Activated T-helper 1 cell treated with anti-CD3 and anti-CD28 coated beads, Interleukin-12 subunit alpha, Interleukin-12 subunit beta, Interleukin-2, Interleukin-4 antibody, amounts not matched to agents 30 ng/mL and 10 ng/mL and 1 ng/mL, durations not matched to agents 14 hours and 24 hours and 36 hours (primary cell): ENCODE measurements at regions of chr17 and their contacts with region 1.

Region 1: GRCh38 chr17:59707114-59707970 is at the starts of genes PTRH2 and VMP1:
- DNase-seq: peak; percentile 92
- H3K4me3 Mint-ChIP-seq: peak within 1 kb of the TSS; percentile 98
- H3K27ac Mint-ChIP-seq: peak within 1 kb of the TSS; percentile 96
- H3K4me1 Mint-ChIP-seq: peaks cover 50% of the 10 kb centered on the region
- H3K27me3 Mint-ChIP-seq: no peaks in the 10 kb centered on the region
- total RNA-seq, gene PTRH2: 49.7 and 51.1 TPM in 2 replicates
- total RNA-seq, gene VMP1: 357 and 374 TPM in 2 replicates

Region 2: DNA sequence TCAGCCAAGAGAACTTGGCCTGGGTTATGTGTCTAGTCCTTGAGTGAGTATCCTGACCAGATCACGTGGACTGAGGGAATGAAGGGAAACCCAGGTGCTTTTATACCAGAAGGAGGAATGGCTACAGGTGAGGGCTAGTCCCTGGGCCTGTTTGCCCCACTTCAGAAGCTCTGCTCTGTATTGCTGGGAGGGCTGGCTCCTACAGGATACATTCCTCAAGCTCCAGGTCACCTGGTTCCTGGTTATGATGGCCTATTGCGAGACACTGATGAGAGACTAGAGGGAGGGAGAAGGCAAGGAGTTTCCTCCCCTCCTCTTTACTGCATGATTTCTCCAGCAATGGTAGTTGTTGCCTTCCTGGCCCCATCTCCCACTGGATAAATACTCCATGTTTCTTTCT is 516.5 kb before region 1 on chr17:
- intact Hi-C with region 1: no loop called
- DNase-seq: no peak
- H3K4me3 Mint-ChIP-seq: no peak overlapping the region
- H3K27ac Mint-ChIP-seq: no peak overlapping the region
- H3K4me1 Mint-ChIP-seq: no peaks in the 10 kb centered on the region
- H3K27me3 Mint-ChIP-seq: no peaks in the 10 kb centered on the region

Region 3: DNA sequence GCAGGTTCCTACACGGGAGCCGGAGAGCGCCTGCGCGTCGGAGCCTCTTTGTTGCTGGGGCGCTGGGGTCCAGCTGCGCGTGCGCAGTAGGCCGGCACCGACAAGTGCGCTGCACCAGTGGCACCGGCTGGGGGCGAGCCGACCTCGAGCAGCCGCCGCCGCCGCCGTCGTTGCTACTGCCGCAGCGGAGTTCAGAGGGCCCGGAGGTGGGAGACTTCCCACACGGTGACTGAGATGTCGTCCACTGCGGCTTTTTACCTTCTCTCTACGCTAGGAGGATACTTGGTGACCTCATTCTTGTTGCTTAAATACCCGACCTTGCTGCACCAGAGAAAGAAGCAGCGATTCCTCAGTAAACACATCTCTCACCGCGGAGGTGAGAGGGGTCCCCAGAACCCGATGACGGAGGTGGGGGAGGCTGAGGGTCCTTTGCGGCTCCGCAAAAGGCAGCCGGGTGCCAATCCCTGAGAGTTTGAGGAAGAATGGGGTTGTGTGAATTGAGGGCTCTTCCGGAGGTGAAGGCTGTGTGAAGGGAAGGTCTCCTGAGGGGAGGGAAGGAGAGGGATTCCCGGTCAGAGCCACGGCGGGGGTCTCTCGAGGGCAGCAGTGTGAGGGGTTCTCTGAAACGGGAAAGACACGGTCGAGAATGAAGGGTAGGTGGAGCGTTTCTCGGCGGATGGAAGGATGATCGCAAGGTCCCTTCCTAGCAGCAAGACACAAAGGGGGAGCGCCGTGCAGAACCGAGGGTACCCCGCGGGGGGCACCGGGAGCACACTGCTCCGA is 486.8 kb before region 1 on chr17 and contains the start of gene GDPD1:
- intact Hi-C with region 1: loop called (anchors 1 kb)
- DNase-seq: peak; percentile 97
- H3K4me3 Mint-ChIP-seq: peak within 1 kb of the TSS; percentile 95
- H3K27ac Mint-ChIP-seq: peak within 1 kb of the TSS; percentile 93
- H3K4me1 Mint-ChIP-seq: peaks cover 14% of the 10 kb centered on the region
- H3K27me3 Mint-ChIP-seq: peaks cover 6% of the 10 kb centered on the region
- total RNA-seq, gene GDPD1: 2.7 and 3.2 TPM in 2 replicates

Region 4: DNA sequence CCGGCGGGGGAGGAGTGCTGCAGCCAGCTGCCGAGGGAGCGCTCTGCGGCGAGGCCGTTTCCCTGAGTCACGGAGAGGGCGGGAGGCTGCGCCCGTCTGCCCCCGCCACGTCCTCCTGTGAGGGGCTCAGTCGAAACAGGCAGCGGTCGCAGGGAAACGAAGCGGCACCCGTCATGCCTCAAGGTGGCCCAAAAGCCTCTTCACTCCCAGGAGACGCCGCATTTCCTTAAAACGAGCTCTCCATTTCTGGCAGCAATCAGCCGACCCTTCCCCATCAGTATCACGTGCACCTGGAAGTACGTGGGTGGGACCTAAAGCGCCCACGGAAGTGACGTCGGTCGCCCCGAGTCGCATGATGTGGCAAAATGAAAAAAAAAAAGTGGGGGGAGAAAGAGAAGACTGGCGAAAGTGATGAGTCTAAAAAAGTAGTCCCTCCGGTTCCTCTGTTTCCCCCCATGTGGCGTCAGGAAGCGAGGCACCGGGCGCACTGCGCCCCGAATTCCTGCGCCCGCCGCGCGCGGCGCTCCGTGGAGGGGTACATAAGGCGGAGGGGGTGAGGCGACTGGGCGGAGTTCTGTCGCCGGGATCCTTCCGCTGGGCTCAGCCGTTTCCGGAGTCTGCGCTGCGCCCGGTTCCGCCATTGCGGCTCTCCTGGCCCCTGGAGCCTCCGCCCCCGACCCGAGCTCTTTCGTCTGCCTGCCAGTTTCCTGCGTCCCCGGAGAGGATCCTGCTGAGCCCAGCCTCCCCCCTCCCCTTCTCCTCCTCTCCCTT is 87.9 kb before region 1 on chr17 and contains the start of gene CLTC:
- intact Hi-C with region 1: loop called (anchors 1 kb)
- DNase-seq: peak; percentile 90
- H3K4me3 Mint-ChIP-seq: peak within 1 kb of the TSS; percentile 97
- H3K27ac Mint-ChIP-seq: peak within 1 kb of the TSS; percentile 100
- H3K4me1 Mint-ChIP-seq: peaks cover 57% of the 10 kb centered on the region
- H3K27me3 Mint-ChIP-seq: no peaks in the 10 kb centered on the region
- total RNA-seq, gene CLTC: 176 and 186 TPM in 2 replicates

Region 5: GRCh38 chr17:59641799-59642489 is 65.4 kb before region 1 on chr17:
- intact Hi-C with region 1: no loop called
- DNase-seq: peak; percentile 3
- H3K4me3 Mint-ChIP-seq: peak overlapping the region; percentile 16
- H3K27ac Mint-ChIP-seq: peak overlapping the region; percentile 72
- H3K4me1 Mint-ChIP-seq: peaks cover 50% of the 10 kb centered on the region
- H3K27me3 Mint-ChIP-seq: no peaks in the 10 kb centered on the region

Region 6: DNA sequence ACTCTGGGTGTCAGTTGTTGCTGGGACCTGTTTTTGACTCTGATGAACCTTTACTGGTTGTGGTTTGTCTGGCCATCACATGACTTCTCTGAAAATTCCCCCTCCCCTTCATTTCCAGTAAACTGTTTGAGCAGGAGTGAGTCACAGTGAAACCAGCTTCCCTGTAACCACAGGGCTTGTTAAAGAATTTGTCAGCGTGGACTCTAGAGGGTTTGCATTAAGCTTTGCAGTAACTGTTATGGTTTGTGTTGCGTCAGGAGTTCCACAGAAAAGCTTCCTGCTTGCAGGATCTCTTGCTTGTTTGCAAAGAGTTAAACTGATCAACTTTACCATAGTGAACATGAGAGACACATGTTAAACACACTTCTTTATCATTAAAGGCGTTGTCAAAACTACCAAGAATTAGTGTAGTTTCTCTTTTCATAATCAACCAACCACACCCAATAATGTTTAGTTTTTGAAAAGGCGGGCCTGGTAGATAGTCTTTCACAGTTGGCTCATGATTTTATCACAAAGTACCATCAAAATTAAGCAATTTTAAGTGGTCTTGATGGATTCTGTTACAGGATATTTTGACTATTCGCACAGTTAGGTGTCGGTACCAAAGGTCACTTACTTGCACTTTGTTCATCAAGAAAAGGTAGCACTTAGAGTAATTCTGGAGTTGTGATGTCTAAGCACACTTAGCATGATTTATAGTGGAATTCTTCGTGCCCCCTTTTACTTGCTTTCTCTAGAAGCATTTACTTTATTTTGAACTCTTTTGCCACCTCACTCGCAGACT is 79.4 kb after region 1 on chr17:
- intact Hi-C with region 1: loop called (anchors 1 kb)
- DNase-seq: peak; percentile 90
- H3K4me3 Mint-ChIP-seq: peak overlapping the region; percentile 60
- H3K27ac Mint-ChIP-seq: peak overlapping the region; percentile 90
- H3K4me1 Mint-ChIP-seq: peaks cover 57% of the 10 kb centered on the region
- H3K27me3 Mint-ChIP-seq: peaks cover 2% of the 10 kb centered on the region

Region 7: GRCh38 chr17:59964482-59965328 is 257.4 kb after region 1 on chr17 and contains the start of gene RNFT1:
- intact Hi-C with region 1: loop called (anchors 1 kb)
- DNase-seq: peak; percentile 86
- H3K4me3 Mint-ChIP-seq: peak within 1 kb of the TSS; percentile 84
- H3K27ac Mint-ChIP-seq: peak within 1 kb of the TSS; percentile 94
- H3K4me1 Mint-ChIP-seq: peaks cover 25% of the 10 kb centered on the region
- H3K27me3 Mint-ChIP-seq: peaks cover 12% of the 10 kb centered on the region
- total RNA-seq, gene RNFT1: 32.2 and 35.5 TPM in 2 replicates